Naive thymus-derived CD4-positive, alpha-beta T cell (primary cell): ENCODE measurements at regions of chr16 and their contacts with region 1.

Region 1: GRCh38 chr16:78099372-78100161 is at the start of gene WWOX:
- DNase-seq: peak; percentile 92 to 98 (median 96)
- ATAC-seq: peak; percentile 97
- H3K4me3 ChIP-seq: peak within 1 kb of the TSS; percentile 99
- H3K4me3 Mint-ChIP-seq: peak within 1 kb of the TSS; percentile 80 to 94 (median 90)
- H3K27ac ChIP-seq: peak within 1 kb of the TSS; percentile 81
- H3K27ac Mint-ChIP-seq: peak within 1 kb of the TSS; percentile 81 to 96 (median 94)
- H3K4me1 ChIP-seq: peaks cover 8 to 11% of the 10 kb centered on the region in 2 donors
- H3K4me1 Mint-ChIP-seq: peaks cover 14 to 46% (median 28%) of the 10 kb centered on the region in 7 donors
- H3K27me3 ChIP-seq: no peaks in the 10 kb centered on the region
- H3K27me3 Mint-ChIP-seq: peaks cover 0 to 8% (median 2%) of the 10 kb centered on the region in 5 donors
- total RNA-seq, gene WWOX: 19.2 to 31.1 (median 26.1) TPM

Region 2: GRCh38 chr16:77211880-77212740 is 887.5 kb before region 1 on chr16:
- CTCF ChIA-PET with region 1: no interaction called
- POLR2A ChIA-PET with region 1: no interaction called
- intact Hi-C with region 1: loop called in 1 of 2 experiments (anchors 1 kb)
- DNase-seq: peak; percentile 57 to 84 (median 76)
- ATAC-seq: peak; percentile 86
- H3K4me3 ChIP-seq: peak overlapping the region; percentile 69
- H3K4me3 Mint-ChIP-seq: peak overlapping the region; percentile 83 to 92 (median 88)
- H3K27ac ChIP-seq: peak overlapping the region; percentile 85
- H3K27ac Mint-ChIP-seq: peak overlapping the region; percentile 56 to 92 (median 81)
- H3K4me1 ChIP-seq: peaks cover 0 to 4% of the 10 kb centered on the region in 2 donors
- H3K4me1 Mint-ChIP-seq: peaks cover 8 to 15% (median 14%) of the 10 kb centered on the region in 7 donors
- H3K27me3 ChIP-seq: no peaks in the 10 kb centered on the region
- H3K27me3 Mint-ChIP-seq: peaks cover 0 to 5% (median 0%) of the 10 kb centered on the region in 5 donors

Region 3: DNA sequence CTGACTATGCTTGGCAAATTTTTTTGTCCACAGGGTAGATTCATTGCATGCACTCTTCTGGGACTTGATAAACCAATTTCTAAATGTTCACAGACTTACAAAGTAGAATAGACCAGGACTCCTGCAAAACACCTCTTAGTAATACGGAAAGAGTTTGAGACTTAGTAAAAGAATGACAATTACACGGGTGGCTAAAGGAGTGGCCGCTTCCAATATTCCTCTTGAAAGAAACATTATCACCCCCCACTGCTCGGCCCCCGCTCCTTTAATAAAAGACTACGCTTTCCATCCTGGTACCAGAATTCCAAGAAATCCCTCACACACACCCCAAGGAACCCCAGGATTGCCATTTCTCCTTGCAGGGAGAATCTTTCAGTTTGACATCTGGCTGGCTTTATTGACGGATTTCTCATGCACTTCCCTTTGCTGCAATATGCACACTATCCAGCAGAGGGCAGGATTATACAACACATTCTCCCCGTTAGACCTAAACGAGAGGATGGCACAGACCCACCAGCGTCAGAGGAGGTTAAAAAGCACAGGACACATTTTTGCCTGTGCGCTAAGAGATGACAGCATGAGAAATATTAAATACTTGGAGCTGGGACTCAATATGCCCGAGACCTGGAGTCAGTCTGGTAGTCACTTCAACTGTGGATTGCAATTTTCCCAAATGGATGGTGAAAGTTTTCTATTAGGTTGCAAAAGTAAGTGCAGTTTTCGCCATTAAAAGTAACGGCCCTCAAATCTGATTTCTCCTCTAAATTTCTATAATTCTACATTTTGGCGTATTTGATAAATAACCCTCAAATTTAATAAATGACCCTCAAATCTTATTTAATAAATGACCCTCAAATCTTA is 423.9 kb before region 1 on chr16:
- CTCF ChIA-PET with region 1: interaction called, 3 read pairs
- POLR2A ChIA-PET with region 1: no interaction called
- intact Hi-C with region 1: loop called (anchors 1 to 10 kb)
- DNase-seq: peak; percentile 12 to 69 (median 54)
- ATAC-seq: peak; percentile 87
- H3K4me3 ChIP-seq: no peak overlapping the region
- H3K4me3 Mint-ChIP-seq: no peak overlapping the region
- H3K27ac ChIP-seq: no peak overlapping the region
- H3K27ac Mint-ChIP-seq: no peak overlapping the region
- H3K4me1 ChIP-seq: no peaks in the 10 kb centered on the region
- H3K4me1 Mint-ChIP-seq: no peaks in the 10 kb centered on the region
- H3K27me3 ChIP-seq: no peaks in the 10 kb centered on the region
- H3K27me3 Mint-ChIP-seq: peaks cover 0 to 10% (median 7%) of the 10 kb centered on the region in 5 donors

Region 4: DNA sequence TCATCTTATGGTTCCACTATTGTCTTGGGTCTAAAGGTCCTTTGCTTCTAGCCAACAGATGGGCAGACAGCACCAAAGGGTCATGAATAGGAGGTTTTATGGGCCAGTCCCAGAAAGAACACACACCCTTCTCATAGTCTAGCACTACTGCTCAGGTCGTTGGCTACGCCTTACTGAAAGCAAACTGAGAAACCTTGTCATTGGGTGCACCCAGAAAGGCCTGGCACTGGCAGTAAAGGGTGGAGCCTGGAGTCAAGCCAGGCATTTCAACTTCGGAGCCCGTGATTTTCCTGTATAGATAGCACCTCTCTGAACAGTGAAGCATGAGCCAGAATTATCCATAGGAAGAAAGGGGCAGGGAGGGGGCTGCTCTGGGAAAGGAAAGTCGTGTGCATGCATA is 236.3 kb before region 1 on chr16:
- CTCF ChIA-PET with region 1: no interaction called
- POLR2A ChIA-PET with region 1: no interaction called
- intact Hi-C with region 1: no loop called
- DNase-seq: no peak
- ATAC-seq: no peak
- H3K4me3 ChIP-seq: no peak overlapping the region
- H3K4me3 Mint-ChIP-seq: no peak overlapping the region
- H3K27ac ChIP-seq: no peak overlapping the region
- H3K27ac Mint-ChIP-seq: no peak overlapping the region
- H3K4me1 ChIP-seq: no peaks in the 10 kb centered on the region
- H3K4me1 Mint-ChIP-seq: peaks cover 0 to 5% (median 3%) of the 10 kb centered on the region in 7 donors
- H3K27me3 ChIP-seq: no peaks in the 10 kb centered on the region
- H3K27me3 Mint-ChIP-seq: peaks cover under 1 to 18% (median 13%) of the 10 kb centered on the region in 5 donors

Region 5: DNA sequence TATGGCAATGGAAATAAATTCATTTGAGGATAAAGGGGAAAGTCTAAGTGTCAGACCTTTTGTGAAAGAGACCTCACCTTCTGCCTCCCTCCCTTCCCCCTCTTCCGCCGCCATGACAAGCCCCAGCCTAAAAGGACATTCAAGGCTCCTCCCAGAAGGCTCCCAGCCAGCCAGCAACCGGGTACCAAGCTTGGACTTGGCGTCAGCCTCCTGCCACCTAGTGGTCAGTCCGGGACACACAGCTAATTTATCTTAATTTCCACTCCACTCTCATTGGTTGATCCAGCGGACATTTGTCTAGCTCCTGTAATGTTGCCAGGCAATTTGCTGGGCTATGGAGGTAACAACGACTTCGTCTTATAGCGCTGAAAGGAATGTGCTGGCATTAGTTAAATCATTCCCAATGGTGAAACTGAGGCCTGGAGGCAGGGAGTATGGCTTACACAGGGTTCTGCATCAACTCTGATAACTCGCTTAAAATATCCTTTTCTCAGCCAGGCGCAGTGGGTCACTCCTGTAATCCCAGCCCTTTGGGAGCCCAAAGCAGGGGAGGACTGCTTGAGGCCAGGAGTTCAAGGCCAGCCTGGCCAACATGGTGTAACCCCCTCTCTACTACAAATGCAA is 96.5 kb before region 1 on chr16:
- CTCF ChIA-PET with region 1: no interaction called
- POLR2A ChIA-PET with region 1: no interaction called
- intact Hi-C with region 1: loop called in 1 of 2 experiments (anchors 1 kb)
- DNase-seq: peak; percentile 15 to 69 (median 46)
- ATAC-seq: peak; percentile 86
- H3K4me3 ChIP-seq: no peak overlapping the region
- H3K4me3 Mint-ChIP-seq: no peak overlapping the region
- H3K27ac ChIP-seq: no peak overlapping the region
- H3K27ac Mint-ChIP-seq: peak overlapping the region in 1 of 9 donors; percentile 59
- H3K4me1 ChIP-seq: no peaks in the 10 kb centered on the region
- H3K4me1 Mint-ChIP-seq: peaks cover 0 to 6% (median 0%) of the 10 kb centered on the region in 7 donors
- H3K27me3 ChIP-seq: no peaks in the 10 kb centered on the region
- H3K27me3 Mint-ChIP-seq: peaks cover 0 to 18% (median 8%) of the 10 kb centered on the region in 5 donors

Region 6: GRCh38 chr16:78742501-78743283 is 643.1 kb after region 1 on chr16:
- CTCF ChIA-PET with region 1: no interaction called
- POLR2A ChIA-PET with region 1: no interaction called
- intact Hi-C with region 1: loop called in 1 of 2 experiments (anchors 5 kb)
- DNase-seq: peak; percentile 27 to 72 (median 46)
- ATAC-seq: peak; percentile 93
- H3K4me3 ChIP-seq: peak overlapping the region; percentile 62
- H3K4me3 Mint-ChIP-seq: peak overlapping the region; percentile 61 to 84 (median 77)
- H3K27ac ChIP-seq: peak overlapping the region; percentile 73
- H3K27ac Mint-ChIP-seq: peak overlapping the region; percentile 86 to 98 (median 93)
- H3K4me1 ChIP-seq: peaks cover 12 to 22% of the 10 kb centered on the region in 2 donors
- H3K4me1 Mint-ChIP-seq: peaks cover 5 to 23% (median 20%) of the 10 kb centered on the region in 7 donors
- H3K27me3 ChIP-seq: no peaks in the 10 kb centered on the region
- H3K27me3 Mint-ChIP-seq: no peaks in the 10 kb centered on the region

Region 7: GRCh38 chr16:79286646-79287423 is 1187.3 kb after region 1 on chr16:
- CTCF ChIA-PET with region 1: no interaction called
- POLR2A ChIA-PET with region 1: no interaction called
- intact Hi-C with region 1: loop called in 1 of 2 experiments (anchors 5 kb)
- DNase-seq: peak in 2 of 9 donors; percentile 21 to 40
- ATAC-seq: peak; percentile 73
- H3K4me3 ChIP-seq: peak overlapping the region; percentile 24
- H3K4me3 Mint-ChIP-seq: peak overlapping the region; percentile 26 to 75 (median 64)
- H3K27ac ChIP-seq: no peak overlapping the region
- H3K27ac Mint-ChIP-seq: peak overlapping the region in 3 of 9 donors; percentile 23 to 79 (median 45)
- H3K4me1 ChIP-seq: peaks cover 9 to 33% of the 10 kb centered on the region in 2 donors
- H3K4me1 Mint-ChIP-seq: peaks cover 15 to 46% (median 33%) of the 10 kb centered on the region in 7 donors
- H3K27me3 ChIP-seq: no peaks in the 10 kb centered on the region
- H3K27me3 Mint-ChIP-seq: peaks cover 0 to 8% (median 1%) of the 10 kb centered on the region in 5 donors